ENCODE measurements at regions of chr2 and their contacts with region 1.

Region 1: DNA sequence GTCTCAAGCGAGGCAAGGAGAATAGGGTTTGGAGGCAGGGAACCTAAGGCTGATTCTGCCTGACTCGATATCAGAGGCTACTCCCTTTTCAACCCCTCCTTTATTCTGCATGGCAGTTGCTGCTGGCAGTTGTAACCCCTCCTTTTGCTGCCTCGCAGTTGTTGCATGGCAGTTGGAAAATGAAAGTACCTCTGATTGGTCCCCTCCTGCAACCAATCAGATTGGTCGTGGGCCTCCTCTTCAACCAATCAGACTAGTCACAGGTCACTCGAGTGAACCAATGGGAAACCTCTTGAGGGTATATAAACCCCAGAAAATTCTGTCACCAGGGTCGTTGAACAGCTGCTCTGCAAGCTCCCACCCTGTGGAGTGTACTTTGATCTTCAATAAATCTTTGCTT is 294.3 kb upstream of the SLC8A1 start:
- DNase-seq: no peak
- ATAC-seq: no peak
- H3K4me3 ChIP-seq: no peak overlapping the region
- H3K27ac ChIP-seq: no peak overlapping the region
- H3K4me1 ChIP-seq: peaks cover 14% of the 10 kb centered on the region
- H3K27me3 ChIP-seq: no peaks in the 10 kb centered on the region
- CTCF ChIP-seq: no peak

Region 2: GRCh38 chr2:40584432-40584831 is 161.7 kb before region 1 on chr2:
- CTCF ChIA-PET with region 1: no interaction called
- POLR2A ChIA-PET with region 1: no interaction called
- intact Hi-C with region 1: loop called (anchors 10 kb)
- DNase-seq: peak; percentile 66
- ATAC-seq: peak; percentile 98
- H3K4me3 ChIP-seq: no peak overlapping the region
- H3K27ac ChIP-seq: peak overlapping the region; percentile 42
- H3K4me1 ChIP-seq: peaks cover 6% of the 10 kb centered on the region; the same call in 1 of the 2 replicates
- H3K27me3 ChIP-seq: no peaks in the 10 kb centered on the region
- CTCF ChIP-seq: no peak